ENCODE measurements at regions of chr10 and their contacts with region 1.

Region 1: DNA sequence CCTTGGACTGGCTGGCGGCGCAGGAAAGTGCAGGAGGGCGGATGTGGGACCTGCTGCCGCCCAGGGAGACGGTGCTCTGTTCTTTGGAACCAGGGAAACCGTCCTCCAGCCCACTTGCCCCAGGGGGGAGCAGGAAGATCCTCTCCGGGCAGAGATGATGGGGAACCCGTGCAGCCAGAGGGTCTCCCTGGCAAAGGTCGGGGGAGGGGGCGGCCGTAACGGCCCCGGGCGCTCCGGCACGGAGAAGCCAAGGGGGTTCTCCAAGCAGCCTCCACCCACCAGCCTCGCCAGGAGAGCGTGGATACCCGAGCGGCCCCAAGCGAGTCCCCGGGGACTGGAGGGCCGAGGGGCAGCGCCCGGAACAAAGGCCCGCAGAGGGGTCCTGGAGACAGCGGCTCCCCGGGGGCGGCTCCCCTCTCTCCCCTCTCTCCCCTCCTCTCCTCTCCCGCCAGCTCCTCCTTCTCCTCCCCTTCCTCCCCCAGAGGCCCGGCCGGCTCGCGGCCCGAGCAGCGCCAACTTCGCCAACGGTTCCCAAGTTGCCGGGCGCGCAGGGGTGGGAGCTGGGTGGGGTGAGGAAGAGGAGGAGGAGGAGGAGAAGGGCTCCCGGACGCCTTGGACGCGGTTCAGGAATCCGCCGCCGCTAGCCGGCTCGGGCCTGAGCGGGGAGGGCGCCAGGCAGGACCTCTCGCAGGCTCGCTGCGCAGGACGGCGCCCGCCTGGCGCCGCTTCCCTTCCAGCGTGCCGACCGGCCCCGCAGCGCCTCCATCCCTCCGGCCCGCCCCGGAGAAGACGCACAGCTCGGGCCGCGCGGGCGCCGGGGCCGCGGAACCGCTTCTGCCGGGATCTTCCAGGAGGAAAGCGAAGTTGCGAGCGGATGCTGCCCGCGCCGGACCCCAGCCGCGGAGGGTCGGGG is at the start of gene CHST3:
- DNase-seq: peak; percentile 81 to 91 (median 86)
- H3K4me3 ChIP-seq: peak within 1 kb of the TSS; percentile 84
- H3K27ac ChIP-seq: peak within 1 kb of the TSS; percentile 96 to 98
- H3K4me1 ChIP-seq: peaks cover 24% of the 10 kb centered on the region
- H3K27me3 ChIP-seq: no peaks in the 10 kb centered on the region
- CTCF ChIP-seq: no peak
- EP300 ChIP-seq: no peak
- POLR2A ChIP-seq: peak; percentile 62
- total RNA-seq, gene CHST3: 26.0 to 69.2 (median 36.1) TPM

Region 2: GRCh38 chr10:71999360-72000072 is 35.5 kb after region 1 on chr10:
- intact Hi-C with region 1: loop called in 1 of 4 experiments (anchors 5 kb)
- DNase-seq: peak; percentile 94 to 97 (median 95)
- H3K4me3 ChIP-seq: peak overlapping the region; percentile 3
- H3K27ac ChIP-seq: peak overlapping the region; percentile 14 to 78
- H3K4me1 ChIP-seq: peaks cover 35% of the 10 kb centered on the region
- H3K27me3 ChIP-seq: no peaks in the 10 kb centered on the region
- CTCF ChIP-seq: no peak
- EP300 ChIP-seq: peak; percentile 18
- POLR2A ChIP-seq: no peak

Region 3: DNA sequence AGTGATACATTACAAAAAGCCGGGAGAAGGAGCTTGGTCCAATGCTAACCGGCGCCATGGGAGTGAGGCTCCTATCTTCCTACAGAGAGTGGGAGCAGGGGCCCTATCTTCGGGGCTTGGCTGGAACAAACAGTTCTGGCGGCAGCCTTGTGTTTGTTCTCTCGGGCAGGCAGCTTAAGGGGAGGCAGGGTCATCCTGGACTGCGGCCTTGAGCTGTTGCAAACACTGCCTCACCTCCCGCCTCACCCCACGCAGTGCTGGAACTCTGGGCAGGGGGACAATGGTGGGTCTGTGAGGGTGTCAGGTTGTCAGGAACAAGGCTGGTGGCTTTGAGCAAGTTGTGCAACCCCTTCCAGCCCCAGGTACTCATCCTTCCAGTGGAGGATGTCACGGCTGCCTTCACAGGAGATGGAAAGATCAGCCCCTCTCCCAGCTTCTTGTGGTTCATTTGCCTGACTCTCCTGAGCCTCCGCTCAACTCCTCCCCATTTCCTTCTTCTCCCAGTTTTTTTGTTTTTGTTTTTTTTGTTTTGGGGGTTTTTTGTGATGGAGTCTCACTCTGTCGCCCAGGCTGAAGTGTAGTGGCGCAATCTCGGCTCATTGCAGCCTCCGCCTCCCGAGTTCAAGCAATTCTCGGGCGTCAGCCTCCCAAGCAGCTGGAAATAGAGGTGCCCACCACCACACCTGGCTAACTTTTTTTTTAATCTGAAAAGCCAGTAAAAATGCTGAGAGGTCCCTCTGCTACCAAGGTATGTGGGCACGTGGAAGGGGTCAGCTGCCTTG is 66.9 kb after region 1 on chr10:
- intact Hi-C with region 1: loop called in 1 of 4 experiments (anchors 5 kb)
- DNase-seq: peak; percentile 84 to 95 (median 94)
- H3K4me3 ChIP-seq: no peak overlapping the region
- H3K27ac ChIP-seq: peak overlapping the region; percentile 74 to 75
- H3K4me1 ChIP-seq: peaks cover 19% of the 10 kb centered on the region
- H3K27me3 ChIP-seq: no peaks in the 10 kb centered on the region
- CTCF ChIP-seq: no peak
- EP300 ChIP-seq: no peak
- POLR2A ChIP-seq: peak; percentile 69

Region 4: GRCh38 chr10:72097448-72098300 is 133.7 kb after region 1 on chr10:
- intact Hi-C with region 1: no loop called
- DNase-seq: no peak
- H3K4me3 ChIP-seq: no peak overlapping the region
- H3K27ac ChIP-seq: no peak overlapping the region
- H3K4me1 ChIP-seq: peaks cover 6% of the 10 kb centered on the region
- H3K27me3 ChIP-seq: no peaks in the 10 kb centered on the region
- CTCF ChIP-seq: no peak
- EP300 ChIP-seq: no peak
- POLR2A ChIP-seq: no peak

Region 5: GRCh38 chr10:72319416-72320254 is 355.6 kb after region 1 on chr10:
- intact Hi-C with region 1: loop called in 1 of 4 experiments (anchors 10 kb)
- DNase-seq: peak; percentile 95 to 97 (median 96)
- H3K4me3 ChIP-seq: peak overlapping the region; percentile 40
- H3K27ac ChIP-seq: peak overlapping the region; percentile 71 to 88
- H3K4me1 ChIP-seq: peaks cover 38% of the 10 kb centered on the region
- H3K27me3 ChIP-seq: no peaks in the 10 kb centered on the region
- CTCF ChIP-seq: peak in 1 of 3 donors; percentile 33
- EP300 ChIP-seq: peak; percentile 68
- POLR2A ChIP-seq: peak; percentile 28